ENCODE measurements at regions of chr3 and their contacts with region 1.

Region 1: DNA sequence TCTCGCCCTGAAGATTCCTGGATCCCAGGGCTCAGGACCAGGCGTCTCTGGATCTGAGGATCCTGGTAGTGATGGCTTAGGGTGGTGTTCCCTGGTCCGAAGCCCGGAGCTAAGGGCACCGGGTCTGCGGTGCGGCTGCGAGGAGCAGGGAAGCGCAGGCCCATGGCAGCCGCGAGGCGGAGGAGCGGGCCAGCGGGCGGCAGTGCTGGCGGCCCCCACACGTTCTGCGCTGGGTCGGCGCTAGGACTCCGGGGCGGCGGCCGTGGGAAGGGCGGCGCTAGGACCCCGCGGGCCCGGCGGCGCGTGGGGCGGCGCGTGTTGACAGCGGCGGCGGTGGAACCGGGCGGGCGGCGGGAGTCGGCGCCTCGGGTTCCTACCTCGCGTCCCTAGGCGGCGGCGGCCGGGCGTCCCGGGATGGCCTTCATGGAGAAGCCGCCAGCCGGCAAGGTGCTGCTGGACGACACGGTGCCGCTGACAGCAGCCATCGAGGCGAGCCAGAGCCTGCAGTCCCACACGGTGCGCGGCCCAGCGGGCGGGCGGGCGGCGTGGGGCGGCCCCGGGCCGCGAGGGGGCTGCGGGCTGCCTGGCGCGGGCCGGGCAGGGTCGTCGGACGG is at the start of gene PXK:
- DNase-seq: peak; percentile 96
- total RNA-seq, gene PXK: 22.5 to 24.8 TPM

Region 2: DNA sequence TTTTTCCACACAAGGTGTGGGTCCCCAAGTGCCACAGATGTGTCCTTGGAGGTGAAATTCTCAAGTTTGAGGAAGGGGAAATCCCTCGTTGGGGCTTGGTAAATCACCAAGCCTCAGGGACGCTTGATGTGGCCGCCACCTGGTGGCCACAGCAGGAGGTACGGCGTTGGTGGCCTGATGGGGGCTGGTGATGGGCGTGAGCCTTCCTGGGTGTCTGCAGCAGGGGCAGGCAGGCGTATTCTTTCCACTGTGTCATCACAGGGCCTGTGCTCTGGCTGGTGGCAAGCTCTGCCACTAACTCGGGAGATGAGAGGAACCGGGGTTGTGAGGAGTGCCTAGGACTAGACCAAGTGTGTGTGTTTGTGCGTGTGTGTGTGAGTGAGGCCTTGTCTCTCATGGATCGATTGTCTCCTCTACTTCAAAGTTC is 200.1 kb after region 1 on chr3:
- intact Hi-C with region 1: loop called (anchors 10 kb)
- DNase-seq: peak; percentile 93